Calu3 (cell line): ENCODE measurements at regions of chr2 and their contacts with region 1.

Region 1: GRCh38 chr2:58448065-58448507 is 207.0 kb upstream of the FANCL start:
- DNase-seq: peak; percentile 76
- H3K4me3 Mint-ChIP-seq: no peak overlapping the region
- H3K27ac Mint-ChIP-seq: peak overlapping the region; percentile 5
- H3K4me1 Mint-ChIP-seq: peaks cover 25% of the 10 kb centered on the region
- H3K27me3 Mint-ChIP-seq: no peaks in the 10 kb centered on the region
- CTCF ChIP-seq: peak; percentile 67

Region 2: DNA sequence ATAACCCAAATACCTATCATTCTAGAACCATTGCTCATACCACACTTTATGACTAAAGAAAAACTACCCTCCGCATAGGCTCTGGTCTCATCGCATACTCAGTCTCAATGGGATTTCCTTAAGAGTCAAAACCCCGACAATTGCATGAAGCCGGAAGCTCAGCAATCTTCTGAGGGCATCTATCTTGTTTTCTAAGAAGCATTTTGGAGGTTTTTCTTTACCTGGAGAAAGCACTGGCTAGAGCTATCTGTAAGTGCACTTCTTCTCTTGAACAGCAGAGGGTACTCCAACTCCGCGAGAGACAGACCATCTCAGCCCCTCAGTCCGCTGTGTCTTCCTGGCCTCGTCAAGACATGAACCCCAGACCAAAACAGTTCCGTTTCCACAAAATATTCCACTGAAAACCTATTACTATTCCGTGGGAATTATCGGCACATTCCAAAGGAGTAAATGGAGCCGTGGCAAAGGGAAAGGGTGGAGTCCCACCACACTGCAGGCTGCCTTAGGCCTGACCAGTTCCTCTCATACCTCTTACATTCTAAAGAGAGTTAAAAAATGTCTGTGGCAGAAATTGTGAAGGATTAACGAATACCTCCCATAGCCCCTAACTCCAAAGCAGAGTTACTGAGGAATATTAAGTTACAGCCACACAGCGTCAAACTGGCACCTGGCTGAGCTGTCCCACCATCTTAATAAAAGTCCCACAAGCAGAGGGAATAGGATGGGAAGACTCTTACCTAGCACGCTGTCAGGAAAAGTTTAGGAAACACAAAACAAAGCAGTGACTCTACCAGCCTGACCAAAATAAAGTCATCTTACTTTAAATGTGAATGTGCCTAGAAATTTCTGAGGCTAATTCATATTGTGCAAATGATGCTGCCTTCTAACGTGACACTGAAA is 727.1 kb before region 1 on chr2:
- CTCF ChIA-PET with region 1: interaction called, 8 read pairs
- intact Hi-C with region 1: loop called (anchors 2 kb)
- DNase-seq: peak; percentile 59
- H3K4me3 Mint-ChIP-seq: peak overlapping the region; percentile 45
- H3K27ac Mint-ChIP-seq: peak overlapping the region; percentile 20
- H3K4me1 Mint-ChIP-seq: peaks cover 17% of the 10 kb centered on the region
- H3K27me3 Mint-ChIP-seq: no peaks in the 10 kb centered on the region
- CTCF ChIP-seq: peak; percentile 61

Region 3: GRCh38 chr2:57906152-57906732 is 541.8 kb before region 1 on chr2:
- CTCF ChIA-PET with region 1: interaction called, 16 read pairs
- intact Hi-C with region 1: loop called (anchors 1 kb)
- DNase-seq: no peak
- H3K4me3 Mint-ChIP-seq: no peak overlapping the region
- H3K27ac Mint-ChIP-seq: no peak overlapping the region
- H3K4me1 Mint-ChIP-seq: no peaks in the 10 kb centered on the region
- H3K27me3 Mint-ChIP-seq: no peaks in the 10 kb centered on the region
- CTCF ChIP-seq: peak; percentile 42

Region 4: DNA sequence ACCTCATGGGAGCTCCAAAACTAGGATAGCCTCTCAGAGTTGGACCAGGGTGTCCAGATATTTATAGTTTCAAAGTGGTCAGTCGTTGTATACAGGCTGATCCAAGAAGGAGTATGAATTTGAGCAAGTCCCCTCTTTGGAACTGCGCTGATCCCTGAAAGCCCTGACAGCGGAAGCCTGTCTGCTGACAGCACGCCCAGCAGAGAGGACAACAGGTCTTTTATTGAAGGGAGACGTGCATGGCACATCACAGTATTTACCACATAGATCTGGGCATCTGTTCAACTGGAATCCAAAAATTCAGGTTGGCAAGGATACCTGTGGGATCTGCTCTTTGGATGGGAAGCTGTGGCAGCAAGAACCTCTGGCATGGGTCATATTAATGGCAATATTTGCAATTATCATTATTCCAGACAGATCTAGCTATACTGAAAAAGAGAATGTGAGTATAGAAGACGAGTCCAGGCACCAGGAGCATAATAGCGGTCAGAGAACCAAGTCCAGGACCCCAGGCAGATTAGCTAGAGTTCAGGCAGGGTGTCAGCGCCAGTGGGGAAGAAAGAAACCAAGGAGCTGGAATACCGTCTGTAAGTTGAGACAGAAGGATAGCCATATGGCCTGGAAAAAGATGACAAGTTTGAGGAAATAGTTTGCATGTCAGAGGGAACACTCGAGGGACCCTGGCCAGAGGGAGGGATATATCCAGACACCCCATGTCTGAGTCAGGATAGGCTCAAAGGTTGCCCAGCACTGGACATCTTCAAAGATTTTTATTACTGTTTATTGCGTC is 53.5 kb after region 1 on chr2:
- CTCF ChIA-PET with region 1: no interaction called
- intact Hi-C with region 1: loop called (anchors 2 kb)
- DNase-seq: no peak
- H3K4me3 Mint-ChIP-seq: no peak overlapping the region
- H3K27ac Mint-ChIP-seq: no peak overlapping the region
- H3K4me1 Mint-ChIP-seq: peaks cover 53% of the 10 kb centered on the region
- H3K27me3 Mint-ChIP-seq: no peaks in the 10 kb centered on the region
- CTCF ChIP-seq: no peak

Region 5: GRCh38 chr2:58669998-58670397 is 221.9 kb after region 1 on chr2:
- CTCF ChIA-PET with region 1: no interaction called
- intact Hi-C with region 1: loop called (anchors 5 kb)
- DNase-seq: no peak
- H3K4me3 Mint-ChIP-seq: no peak overlapping the region
- H3K27ac Mint-ChIP-seq: no peak overlapping the region
- H3K4me1 Mint-ChIP-seq: peaks cover 10% of the 10 kb centered on the region
- H3K27me3 Mint-ChIP-seq: no peaks in the 10 kb centered on the region
- CTCF ChIP-seq: no peak

Region 6: DNA sequence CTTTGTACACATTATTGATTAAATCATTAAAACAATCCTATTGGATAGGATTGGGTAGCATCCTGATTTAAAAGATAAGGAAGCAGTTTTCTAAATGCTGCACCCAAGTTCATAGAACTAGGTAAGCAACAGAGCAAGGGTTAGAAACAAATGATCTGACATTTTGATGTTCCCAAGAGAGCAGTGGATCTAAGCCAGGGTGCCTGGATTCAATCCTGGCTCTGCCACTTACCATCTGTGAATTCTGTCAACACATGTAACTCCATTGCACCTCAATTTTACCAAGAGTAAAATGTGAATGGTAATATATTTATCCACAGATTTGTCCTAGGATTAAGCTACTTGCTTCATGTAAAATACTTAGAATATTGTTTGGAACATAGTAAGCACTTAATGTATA is 775.7 kb after region 1 on chr2:
- CTCF ChIA-PET with region 1: no interaction called
- intact Hi-C with region 1: no loop called
- DNase-seq: no peak
- H3K4me3 Mint-ChIP-seq: no peak overlapping the region
- H3K27ac Mint-ChIP-seq: no peak overlapping the region
- H3K4me1 Mint-ChIP-seq: no peaks in the 10 kb centered on the region
- H3K27me3 Mint-ChIP-seq: peaks cover 16% of the 10 kb centered on the region
- CTCF ChIP-seq: no peak